Activated CD8-positive, alpha-beta T cell treated with anti-CD3 and anti-CD28 coated beads, Interleukin-2, amount 10 ng/mL, durations not matched to agents 7 days and 5 days (primary cell): ENCODE measurements at regions of chr17 and their contacts with region 1.

Region 1: GRCh38 chr17:48457080-48457836 is 27.2 kb upstream of the SKAP1 start:
- DNase-seq: peak; percentile 85
- ATAC-seq: peak; percentile 74
- H3K4me3 Mint-ChIP-seq: peak overlapping the region; percentile 72
- H3K27ac Mint-ChIP-seq: peak overlapping the region; percentile 60
- H3K4me1 Mint-ChIP-seq: peaks cover 65% of the 10 kb centered on the region
- H3K27me3 Mint-ChIP-seq: peaks cover 4% of the 10 kb centered on the region

Region 2: GRCh38 chr17:48392857-48393256 is 64.4 kb before region 1 on chr17:
- CTCF ChIA-PET with region 1: interaction called, 13 read pairs
- POLR2A ChIA-PET with region 1: no interaction called
- DNase-seq: no peak
- ATAC-seq: no peak
- H3K4me3 Mint-ChIP-seq: no peak overlapping the region
- H3K27ac Mint-ChIP-seq: no peak overlapping the region
- H3K4me1 Mint-ChIP-seq: peaks cover 26% of the 10 kb centered on the region
- H3K27me3 Mint-ChIP-seq: no peaks in the 10 kb centered on the region

Region 3: GRCh38 chr17:48413613-48414405 is 43.4 kb before region 1 on chr17:
- CTCF ChIA-PET with region 1: interaction called, 21 read pairs
- POLR2A ChIA-PET with region 1: interaction called, 3 read pairs
- DNase-seq: no peak
- ATAC-seq: peak; percentile 57
- H3K4me3 Mint-ChIP-seq: no peak overlapping the region
- H3K27ac Mint-ChIP-seq: peak overlapping the region; percentile 75
- H3K4me1 Mint-ChIP-seq: peaks cover 71% of the 10 kb centered on the region
- H3K27me3 Mint-ChIP-seq: no peaks in the 10 kb centered on the region

Region 4: DNA sequence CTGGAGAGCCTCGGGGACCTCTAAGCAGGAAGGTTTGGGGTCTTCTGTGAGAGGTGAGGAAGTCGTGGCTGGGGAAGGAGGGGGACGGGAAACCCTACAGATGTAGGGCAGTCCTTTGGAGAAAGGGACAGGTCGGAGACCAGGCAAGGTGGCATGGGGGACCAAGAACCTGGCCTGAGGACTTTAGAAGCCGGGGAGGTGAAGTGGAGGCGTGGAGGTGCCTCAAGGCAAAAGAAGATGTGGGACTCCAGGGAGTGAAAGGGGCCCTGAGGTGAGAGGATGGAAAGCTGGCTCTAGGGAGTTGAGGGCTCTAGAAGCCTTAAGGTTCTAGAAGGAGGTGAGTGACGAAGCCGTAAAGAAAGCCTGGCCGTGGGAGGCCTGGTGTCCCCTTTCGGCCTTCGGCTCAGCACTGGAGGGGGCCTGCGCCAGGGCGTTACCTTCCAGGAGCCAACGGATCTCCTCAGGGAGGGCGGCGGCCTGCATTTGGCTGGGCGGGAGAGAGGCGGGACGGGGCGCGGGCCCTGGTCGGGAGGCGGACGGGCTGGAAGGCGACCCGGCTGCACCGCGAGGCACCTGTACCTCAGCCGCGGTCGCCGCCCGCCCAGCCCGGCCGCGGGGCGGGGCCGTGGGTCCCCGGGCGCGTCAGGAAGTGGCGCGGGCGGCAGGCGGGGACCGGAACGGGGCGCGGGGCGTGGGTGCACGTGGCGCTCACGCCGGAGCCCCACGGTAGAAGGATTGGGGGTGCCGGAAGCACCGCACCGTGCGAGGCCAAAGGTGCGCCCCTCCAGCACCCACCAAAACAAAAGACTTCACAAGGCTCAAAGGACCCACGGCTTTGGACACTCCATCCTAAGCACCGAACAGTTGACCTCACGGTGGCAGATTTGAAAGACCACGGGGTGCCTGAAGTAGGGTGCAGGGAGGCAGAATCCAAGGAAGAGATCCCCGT is 27.3 kb before region 1 on chr17 and contains the start of gene SKAP1:
- CTCF ChIA-PET with region 1: interaction called, 12 read pairs
- POLR2A ChIA-PET with region 1: interaction called, 15 read pairs
- DNase-seq: peak; percentile 67
- ATAC-seq: peak; percentile 66
- H3K4me3 Mint-ChIP-seq: peak within 1 kb of the TSS; percentile 93
- H3K27ac Mint-ChIP-seq: peak within 1 kb of the TSS; percentile 97
- H3K4me1 Mint-ChIP-seq: peaks cover 80% of the 10 kb centered on the region
- H3K27me3 Mint-ChIP-seq: no peaks in the 10 kb centered on the region
- total RNA-seq, gene SKAP1: 93.8 to 94.1 TPM

Region 5: GRCh38 chr17:48441231-48441711 is 16.0 kb before region 1 on chr17:
- CTCF ChIA-PET with region 1: interaction called, 159 read pairs
- POLR2A ChIA-PET with region 1: interaction called, 63 read pairs
- DNase-seq: peak; percentile 71
- ATAC-seq: peak; percentile 65
- H3K4me3 Mint-ChIP-seq: peak overlapping the region; percentile 69
- H3K27ac Mint-ChIP-seq: peak overlapping the region; percentile 93
- H3K4me1 Mint-ChIP-seq: peaks cover 95% of the 10 kb centered on the region
- H3K27me3 Mint-ChIP-seq: no peaks in the 10 kb centered on the region

Region 6: GRCh38 chr17:48577946-48578615 is 120.8 kb after region 1 on chr17 and contains the start of gene HOXB4:
- CTCF ChIA-PET with region 1: no interaction called
- POLR2A ChIA-PET with region 1: no interaction called
- DNase-seq: peak; percentile 83
- ATAC-seq: peak; percentile 86
- H3K4me3 Mint-ChIP-seq: peak within 1 kb of the TSS; percentile 90
- H3K27ac Mint-ChIP-seq: peak within 1 kb of the TSS; percentile 79
- H3K4me1 Mint-ChIP-seq: peaks cover 67% of the 10 kb centered on the region
- H3K27me3 Mint-ChIP-seq: peaks cover 38% of the 10 kb centered on the region
- total RNA-seq, gene HOXB4: 5.7 to 6.1 TPM